ENCODE measurements at regions of chr2 and their contacts with region 1.

Region 1: GRCh38 chr2:15744781-15745180 is 153.1 kb downstream of the DDX1 start:
- DNase-seq: no peak
- ATAC-seq: no peak
- H3K4me3 ChIP-seq: no peak overlapping the region
- H3K27ac ChIP-seq: no peak overlapping the region
- H3K4me1 ChIP-seq: no peaks in the 10 kb centered on the region
- H3K27me3 ChIP-seq: no peaks in the 10 kb centered on the region
- CTCF ChIP-seq: no peak

Region 2: DNA sequence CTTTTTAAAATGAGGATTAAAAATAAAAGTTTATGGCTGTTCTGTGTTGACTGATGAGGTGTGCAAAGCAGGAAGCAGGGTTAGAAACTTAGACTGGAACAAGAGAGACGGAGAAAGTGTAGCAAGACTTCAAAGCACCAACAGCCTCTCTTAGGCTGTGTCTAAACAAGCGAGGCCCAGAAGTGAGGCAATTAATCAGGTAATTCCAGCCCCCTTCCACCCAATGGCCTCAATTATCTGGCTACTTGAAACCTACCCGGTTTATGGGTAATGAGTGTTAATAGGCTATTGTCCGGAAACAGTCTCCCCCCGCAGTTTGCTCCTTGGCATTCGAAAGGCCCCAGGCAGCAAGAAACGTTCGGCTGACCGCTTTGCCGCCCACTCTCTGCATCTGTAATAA is 23.8 kb after region 1 on chr2:
- intact Hi-C with region 1: loop called in 1 of 2 experiments (anchors 1 kb)
- DNase-seq: no peak
- ATAC-seq: no peak
- H3K4me3 ChIP-seq: no peak overlapping the region
- H3K27ac ChIP-seq: no peak overlapping the region
- H3K4me1 ChIP-seq: no peaks in the 10 kb centered on the region
- H3K27me3 ChIP-seq: no peaks in the 10 kb centered on the region
- CTCF ChIP-seq: no peak